ENCODE measurements at regions of chr19 and their contacts with region 1.

Region 1: DNA sequence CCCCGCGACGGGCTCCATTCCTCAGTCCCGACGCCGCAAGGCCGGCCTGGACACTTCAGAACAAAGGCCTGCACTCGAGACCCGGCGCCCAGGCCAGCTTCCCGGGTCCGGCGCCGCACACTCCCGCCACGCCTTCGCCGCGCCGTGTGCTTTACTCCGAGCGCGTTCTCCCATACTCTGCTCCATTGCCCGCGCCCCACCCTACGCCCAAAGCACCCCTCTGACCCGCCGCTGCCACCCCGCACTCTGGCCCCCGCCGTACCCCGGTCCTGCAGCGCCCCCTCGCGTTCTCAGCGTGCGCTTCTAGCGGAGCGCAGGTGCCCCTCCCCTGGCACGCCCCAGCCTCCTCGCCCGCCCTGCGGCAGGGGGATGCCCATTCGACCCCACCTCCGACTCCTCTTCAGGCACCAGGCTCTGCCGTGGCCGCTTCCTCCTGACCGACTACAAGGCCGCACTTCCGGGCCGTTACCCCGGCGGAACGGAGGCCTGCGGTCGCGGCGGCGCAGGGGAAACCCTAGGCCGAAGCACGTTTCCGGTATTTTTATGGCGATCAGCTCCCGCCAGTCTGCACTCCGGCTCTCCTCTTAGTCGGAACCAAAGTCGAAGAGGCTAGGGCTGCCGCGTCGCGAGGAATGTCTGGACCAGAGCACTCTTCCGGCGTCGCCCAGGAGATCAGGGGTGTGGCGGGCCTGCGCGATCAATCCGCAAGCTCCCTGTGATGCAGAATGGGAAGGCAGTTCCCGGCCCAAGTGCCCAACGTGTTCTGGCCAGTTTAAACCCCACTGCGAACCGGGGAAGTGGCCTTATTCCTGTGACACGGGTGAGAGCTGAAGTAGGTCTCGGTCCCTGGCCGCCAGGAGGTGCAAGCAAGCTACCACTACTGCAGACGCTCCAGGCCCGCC is at the start of gene ZBTB45:
- DNase-seq: peak; percentile 87

Region 2: GRCh38 chr19:58228585-58229254 is 290.9 kb before region 1 on chr19 and contains the start of gene ZNF544:
- CTCF ChIA-PET with region 1: no interaction called
- POLR2A ChIA-PET with region 1: interaction called, 11 read pairs
- DNase-seq: no peak

Region 3: DNA sequence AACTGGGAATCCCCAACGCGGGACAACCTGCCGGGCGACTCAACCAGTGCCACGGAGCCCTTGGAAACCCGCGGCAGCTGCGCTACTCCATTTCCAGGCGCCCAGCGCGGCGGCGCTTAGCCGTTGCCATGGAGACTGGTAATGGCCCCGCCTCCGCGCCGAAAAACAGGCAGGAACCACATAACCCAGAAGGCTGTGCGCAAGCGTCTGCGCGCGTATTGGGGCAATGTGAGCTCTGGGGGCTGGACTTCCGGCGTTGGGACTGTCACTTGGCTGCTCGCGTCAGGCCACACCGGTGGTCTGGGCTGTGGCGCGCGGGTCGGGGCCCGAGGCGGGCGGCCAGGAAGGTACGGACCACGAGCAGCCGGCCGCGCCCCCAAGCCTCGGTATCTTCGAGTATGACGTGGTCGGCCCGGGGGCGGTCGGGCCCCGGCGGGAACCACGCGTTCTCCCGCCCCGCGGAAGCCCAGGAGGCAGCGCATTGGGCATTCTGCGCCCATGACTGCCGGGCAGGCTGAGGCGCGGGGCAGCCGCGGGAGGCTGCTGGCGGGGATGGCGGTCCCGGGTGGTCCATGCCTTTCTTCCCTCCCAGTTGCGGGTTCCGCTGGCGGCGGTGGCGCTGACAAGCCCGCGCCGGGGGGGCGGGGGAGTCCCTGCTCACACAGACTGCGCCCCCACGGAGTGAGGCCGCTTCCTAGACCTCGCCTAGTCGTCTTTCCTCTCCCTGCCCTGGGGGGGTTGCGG is 68.1 kb before region 1 on chr19 and contains the start of gene ZNF324B:
- CTCF ChIA-PET with region 1: no interaction called
- POLR2A ChIA-PET with region 1: interaction called, 10 read pairs
- DNase-seq: peak; percentile 98

Region 4: DNA sequence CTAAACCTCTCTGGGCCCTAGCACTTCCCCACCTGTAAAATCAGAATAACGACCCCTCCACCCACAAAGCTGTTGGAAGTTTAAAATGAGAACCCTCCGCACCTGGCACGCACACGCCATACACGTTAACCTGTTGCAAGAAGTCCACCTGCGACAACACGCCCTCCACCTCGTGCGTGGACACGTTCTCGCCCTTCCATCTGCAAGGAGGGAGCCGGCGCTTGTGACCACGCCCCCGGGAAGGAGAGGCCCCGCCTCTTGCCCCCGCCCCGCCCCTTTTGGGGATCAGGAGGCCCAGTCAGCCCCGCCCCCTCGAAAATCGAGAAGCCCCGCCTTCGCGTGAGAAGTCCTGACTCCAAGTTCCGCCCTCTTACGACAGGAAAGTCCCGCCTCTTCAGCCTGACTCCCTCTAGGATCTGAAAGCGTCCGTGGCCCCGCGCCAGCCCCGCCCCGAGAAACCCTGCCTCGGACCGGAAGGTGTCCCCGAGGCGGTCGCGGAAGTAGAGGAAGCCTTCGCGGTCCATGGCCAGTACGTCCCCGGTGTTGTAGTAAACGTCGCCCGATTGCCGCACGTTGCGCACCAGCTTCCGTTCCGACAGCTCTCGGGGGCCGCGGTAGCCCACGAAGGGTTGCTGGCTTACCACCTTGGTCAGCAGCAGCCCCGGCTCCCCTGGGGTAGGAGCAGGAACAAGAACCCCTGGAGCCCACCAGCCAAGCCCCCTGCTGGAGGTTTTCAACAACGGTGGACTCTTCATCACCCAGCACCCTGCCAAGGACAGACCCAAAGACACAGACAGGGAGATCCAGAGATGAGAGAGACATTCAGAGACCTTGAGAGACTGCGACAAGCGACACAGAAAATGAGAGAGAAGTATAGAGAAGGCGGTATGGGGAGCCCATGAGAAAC is 20.3 kb before region 1 on chr19:
- CTCF ChIA-PET with region 1: no interaction called
- POLR2A ChIA-PET with region 1: interaction called, 10 read pairs
- DNase-seq: peak; percentile 97

Region 5: GRCh38 chr19:58543826-58544590 is 24.4 kb after region 1 on chr19 and contains the start of gene TRIM28:
- CTCF ChIA-PET with region 1: interaction called, 9 read pairs
- POLR2A ChIA-PET with region 1: interaction called, 96 read pairs
- DNase-seq: peak; percentile 99

Region 6: GRCh38 chr19:58572818-58573657 is 53.4 kb after region 1 on chr19 and contains the start of gene MZF1:
- CTCF ChIA-PET with region 1: interaction called, 8 read pairs
- POLR2A ChIA-PET with region 1: interaction called, 13 read pairs
- DNase-seq: peak; percentile 95